K562 (cell line): ENCODE measurements at regions of chr11 and their contacts with region 1.

Region 1: DNA sequence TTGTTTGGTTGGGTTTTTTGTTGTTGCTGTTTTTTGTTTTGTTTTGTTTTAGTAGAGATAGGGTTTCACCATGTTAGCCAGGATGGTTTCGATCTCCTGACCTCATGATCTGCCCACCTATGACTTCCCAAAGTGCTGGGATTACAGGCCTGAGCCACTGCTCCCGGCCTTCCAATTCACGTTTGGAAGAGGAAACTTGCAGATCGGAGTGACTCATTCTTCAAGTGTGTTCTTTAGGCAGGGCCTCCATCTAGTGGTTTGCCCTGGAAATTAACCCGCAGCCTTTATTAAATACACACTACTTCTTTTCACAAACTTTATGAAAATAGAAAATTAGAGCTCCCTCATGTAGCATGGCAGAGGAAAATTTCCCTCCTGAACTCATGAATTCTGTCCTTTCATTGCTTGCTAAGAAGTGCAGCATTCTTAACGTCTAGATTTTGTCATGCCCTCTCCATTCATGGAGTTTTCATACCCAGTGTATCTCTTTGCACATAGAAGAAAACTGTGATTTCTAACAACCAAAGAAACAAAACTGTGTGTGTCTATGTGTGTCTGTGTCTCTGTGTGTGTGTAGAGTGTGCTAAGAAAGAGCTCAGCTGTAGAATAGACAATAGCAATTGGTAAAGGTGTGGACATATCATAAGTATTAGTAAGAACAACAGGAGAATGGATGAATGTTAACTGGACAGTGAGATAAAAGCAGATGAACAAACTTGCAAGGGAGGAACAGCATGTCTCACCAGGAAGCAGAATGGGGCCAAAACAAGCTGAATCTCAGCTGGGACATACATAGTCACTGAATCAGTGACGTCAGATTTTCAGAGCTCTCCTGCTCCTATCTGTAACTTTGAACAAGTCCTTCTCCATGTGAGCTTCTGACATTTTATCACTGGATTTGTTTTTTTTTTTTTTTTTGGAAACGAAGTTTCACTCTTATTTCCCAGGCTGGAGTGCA is 118.4 kb downstream of the BBOX1 start:
- DNase-seq: peak; percentile 39 to 65 (median 50)
- ATAC-seq: peak; percentile 84
- H3K4me3 ChIP-seq: no peak overlapping the region
- H3K27ac ChIP-seq: no peak overlapping the region
- H3K4me1 ChIP-seq: no peaks in the 10 kb centered on the region
- H3K27me3 ChIP-seq: no peaks in the 10 kb centered on the region
- CTCF ChIP-seq: peak; percentile 61 to 73 (median 71)
- EP300 ChIP-seq: no peak
- POLR2A ChIP-seq: no peak
- RAD21 ChIP-seq: peak; percentile 72 to 81

Region 2: DNA sequence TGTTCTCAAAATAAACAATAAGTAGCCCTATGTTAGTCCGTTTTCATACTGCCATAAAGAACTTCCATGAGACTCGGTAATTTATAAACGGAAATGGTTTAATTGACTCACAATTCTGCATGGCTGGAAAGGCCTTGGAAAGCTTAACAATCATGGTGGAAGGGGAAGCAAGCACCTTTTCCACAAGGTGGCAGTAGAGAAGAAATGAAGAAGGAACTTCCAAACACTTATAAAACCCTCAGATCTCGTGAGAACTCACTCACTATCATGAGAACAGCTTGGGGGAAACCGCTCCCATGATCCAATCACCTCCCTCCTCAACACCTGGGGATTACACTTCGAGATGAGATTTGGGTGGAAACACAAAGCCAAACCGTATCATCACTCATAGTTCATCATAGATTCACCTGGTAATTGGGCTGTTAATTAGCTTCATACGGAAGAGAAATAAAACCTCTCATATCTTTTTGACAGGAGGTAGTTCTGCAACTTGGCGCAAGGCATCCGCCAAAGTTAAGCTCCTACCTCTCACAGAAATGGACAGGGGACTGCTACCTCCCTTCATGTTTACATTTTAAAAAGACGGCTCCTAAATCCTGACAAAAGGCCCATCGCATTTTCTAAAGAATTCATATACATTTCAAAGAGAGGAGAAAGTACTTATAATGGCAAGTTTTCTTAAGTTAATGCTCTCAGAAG is 635.9 kb before region 1 on chr11:
- CTCF ChIA-PET with region 1: no interaction called
- POLR2A ChIA-PET with region 1: interaction called, 3 read pairs
- in situ Hi-C with region 1: no loop called
- intact Hi-C with region 1: loop called (anchors 10 kb)
- DNase-seq: peak in 1 of 4 experiments; percentile 7
- ATAC-seq: no peak
- H3K4me3 ChIP-seq: no peak overlapping the region
- H3K27ac ChIP-seq: no peak overlapping the region
- H3K4me1 ChIP-seq: no peaks in the 10 kb centered on the region
- H3K27me3 ChIP-seq: no peaks in the 10 kb centered on the region
- CTCF ChIP-seq: peak in 1 of 3 experiments; percentile 19; a peak in 2 of 6 replicates
- EP300 ChIP-seq: no peak
- POLR2A ChIP-seq: no peak
- RAD21 ChIP-seq: peak; percentile 43 to 57

Region 3: GRCh38 chr11:26753723-26754504 is 405.1 kb before region 1 on chr11:
- CTCF ChIA-PET with region 1: interaction called, 3 read pairs
- POLR2A ChIA-PET with region 1: no interaction called
- in situ Hi-C with region 1: no loop called
- intact Hi-C with region 1: loop called (anchors 10 kb)
- DNase-seq: peak in 3 of 4 experiments; percentile 7 to 13 (median 8)
- ATAC-seq: no peak
- H3K4me3 ChIP-seq: no peak overlapping the region
- H3K27ac ChIP-seq: no peak overlapping the region
- H3K4me1 ChIP-seq: no peaks in the 10 kb centered on the region
- H3K27me3 ChIP-seq: no peaks in the 10 kb centered on the region
- CTCF ChIP-seq: peak in 2 of 3 experiments; percentile 16 to 29; a peak in 2 of 6 replicates
- EP300 ChIP-seq: no peak
- POLR2A ChIP-seq: no peak
- RAD21 ChIP-seq: peak; percentile 66 to 67